ENCODE measurements at regions of chr19 and their contacts with region 1.

Region 1: DNA sequence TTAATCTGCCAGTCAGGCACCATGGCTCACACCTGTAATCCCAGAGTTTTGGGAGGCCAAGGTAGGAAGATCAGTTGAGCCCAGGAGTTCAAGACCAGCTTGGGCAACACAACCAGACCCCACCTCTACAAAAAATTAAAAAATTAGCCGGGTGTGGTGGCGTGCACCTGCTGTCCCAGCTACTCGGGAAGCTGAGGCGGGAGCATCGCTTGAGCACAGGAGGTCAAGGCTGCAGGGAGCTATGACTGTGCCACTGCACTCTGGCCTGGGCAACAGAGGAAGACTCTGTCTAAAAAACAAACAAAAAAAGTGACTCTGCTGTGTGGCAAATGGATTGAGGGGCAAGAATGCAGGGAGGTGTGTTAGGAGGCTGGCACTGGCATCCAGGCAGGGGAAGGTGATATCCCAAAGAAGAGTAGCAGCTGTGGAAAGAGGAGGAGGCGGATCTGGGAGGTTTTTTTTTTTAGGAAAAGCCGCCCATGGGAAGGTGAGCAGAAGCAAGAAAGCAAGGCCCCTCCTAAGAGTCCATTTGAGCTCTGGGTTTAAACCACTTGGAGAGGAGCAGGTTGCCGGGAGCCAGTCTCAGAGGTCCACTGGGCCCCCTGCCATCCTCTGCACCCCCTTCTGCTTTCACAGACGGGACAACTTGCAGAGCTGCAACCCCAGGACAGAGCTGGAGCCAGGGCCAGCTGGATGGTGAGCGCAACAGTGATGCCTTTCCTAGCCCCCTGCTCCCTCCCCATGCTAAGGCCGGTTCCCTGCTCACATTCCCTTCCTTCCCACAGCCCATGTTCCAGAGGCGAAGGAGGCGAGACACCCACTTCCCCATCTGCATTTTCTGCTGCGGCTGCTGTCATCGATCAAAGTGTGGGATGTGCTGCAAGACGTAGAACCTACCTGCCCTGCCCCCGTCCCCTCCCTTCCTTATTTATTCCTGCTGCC is 2.1 kb downstream of the HAMP start:
- DNase-seq: no peak
- H3K4me3 Mint-ChIP-seq: no peak overlapping the region
- H3K27ac Mint-ChIP-seq: no peak overlapping the region
- H3K4me1 Mint-ChIP-seq: no peaks in the 10 kb centered on the region
- H3K27me3 Mint-ChIP-seq: peaks cover 16% of the 10 kb centered on the region

Region 2: GRCh38 chr19:35295792-35296462 is 11.5 kb after region 1 on chr19:
- CTCF ChIA-PET with region 1: interaction called, 12 read pairs
- POLR2A ChIA-PET with region 1: no interaction called
- DNase-seq: peak; percentile 51
- H3K4me3 Mint-ChIP-seq: no peak overlapping the region
- H3K27ac Mint-ChIP-seq: peak overlapping the region; percentile 67
- H3K4me1 Mint-ChIP-seq: peaks cover 8% of the 10 kb centered on the region
- H3K27me3 Mint-ChIP-seq: no peaks in the 10 kb centered on the region